ENCODE measurements at regions of chr5 and their contacts with region 1.

Region 1: DNA sequence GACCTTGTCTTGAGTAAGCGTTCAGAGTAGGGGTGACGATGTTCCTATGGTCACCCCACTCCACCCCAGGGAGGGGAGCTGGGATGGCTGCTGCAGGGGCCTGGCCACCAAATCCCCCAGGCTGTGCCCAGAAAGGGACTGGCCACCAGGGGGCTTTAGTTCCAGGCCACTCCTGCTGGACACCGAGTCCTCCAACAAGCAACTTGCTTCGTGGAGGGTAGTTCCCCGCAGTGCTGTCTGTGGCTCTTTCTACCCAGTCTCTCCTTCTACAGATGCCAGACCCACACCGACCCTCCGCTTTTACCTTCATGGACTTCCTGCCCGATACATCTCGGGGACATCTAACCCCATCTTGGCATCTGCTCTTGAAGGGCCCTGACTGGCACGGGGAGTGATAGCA is 35.7 kb upstream of the GABRP start:
- DNase-seq: no peak
- H3K4me3 ChIP-seq: no peak overlapping the region
- H3K27ac ChIP-seq: no peak overlapping the region
- H3K4me1 ChIP-seq: no peaks in the 10 kb centered on the region
- CTCF ChIP-seq: no peak

Region 2: GRCh38 chr5:170737591-170737990 is 10.3 kb before region 1 on chr5:
- CTCF ChIA-PET with region 1: no interaction called
- POLR2A ChIA-PET with region 1: no interaction called
- intact Hi-C with region 1: no loop called
- DNase-seq: no peak
- H3K4me3 ChIP-seq: no peak overlapping the region
- H3K27ac ChIP-seq: no peak overlapping the region
- H3K4me1 ChIP-seq: no peaks in the 10 kb centered on the region
- CTCF ChIP-seq: no peak

Region 3: GRCh38 chr5:170791325-170791954 is 43.6 kb after region 1 on chr5:
- CTCF ChIA-PET with region 1: no interaction called
- POLR2A ChIA-PET with region 1: no interaction called
- intact Hi-C with region 1: loop called (anchors 1 kb)
- DNase-seq: peak; percentile 22
- H3K4me3 ChIP-seq: no peak overlapping the region
- H3K27ac ChIP-seq: no peak overlapping the region
- H3K4me1 ChIP-seq: no peaks in the 10 kb centered on the region
- CTCF ChIP-seq: peak; percentile 68

Region 4: GRCh38 chr5:170896779-170897178 is 148.9 kb after region 1 on chr5:
- CTCF ChIA-PET with region 1: no interaction called
- POLR2A ChIA-PET with region 1: no interaction called
- intact Hi-C with region 1: loop called (anchors 10 kb)
- DNase-seq: no peak
- H3K4me3 ChIP-seq: no peak overlapping the region
- H3K27ac ChIP-seq: no peak overlapping the region
- H3K4me1 ChIP-seq: no peaks in the 10 kb centered on the region
- CTCF ChIP-seq: 0 out of 2 replicates have a peak, but pooled peaks have one; percentile 35

Region 5: GRCh38 chr5:171342362-171343111 is 594.7 kb after region 1 on chr5:
- CTCF ChIA-PET with region 1: interaction called, 4 read pairs
- POLR2A ChIA-PET with region 1: no interaction called
- intact Hi-C with region 1: loop called (anchors 2 kb)
- DNase-seq: peak; percentile 50
- H3K4me3 ChIP-seq: no peak overlapping the region
- H3K27ac ChIP-seq: no peak overlapping the region
- H3K4me1 ChIP-seq: no peaks in the 10 kb centered on the region
- CTCF ChIP-seq: peak; percentile 84